ENCODE measurements at regions of chr1 and their contacts with region 1.

Region 1: GRCh38 chr1:109041621-109042468 is at the start of gene WDR47:
- DNase-seq: peak; percentile 95 to 98
- ATAC-seq: peak; percentile 98 to 100 (median 99)
- H3K4me3 ChIP-seq: peak within 1 kb of the TSS; percentile 98
- H3K27ac ChIP-seq: peak within 1 kb of the TSS; percentile 85
- H3K4me1 ChIP-seq: peaks cover 11% of the 10 kb centered on the region
- H3K27me3 ChIP-seq: no peaks in the 10 kb centered on the region
- CTCF ChIP-seq: no peak
- total RNA-seq, gene WDR47: 13.9 to 16.3 (median 14.9) TPM

Region 2: GRCh38 chr1:108963052-108963686 is 78.7 kb before region 1 on chr1 and contains the start of gene CLCC1:
- intact Hi-C with region 1: loop called in 1 of 2 experiments (anchors 10 kb)
- DNase-seq: peak; percentile 94 to 95
- ATAC-seq: peak; percentile 96 to 98 (median 96)
- H3K4me3 ChIP-seq: peak within 1 kb of the TSS; percentile 73
- H3K27ac ChIP-seq: peak within 1 kb of the TSS; percentile 94
- H3K4me1 ChIP-seq: peaks cover 19% of the 10 kb centered on the region
- H3K27me3 ChIP-seq: no peaks in the 10 kb centered on the region
- CTCF ChIP-seq: no peak
- total RNA-seq, gene CLCC1: 23.3 to 36.2 (median 30.0) TPM

Region 3: DNA sequence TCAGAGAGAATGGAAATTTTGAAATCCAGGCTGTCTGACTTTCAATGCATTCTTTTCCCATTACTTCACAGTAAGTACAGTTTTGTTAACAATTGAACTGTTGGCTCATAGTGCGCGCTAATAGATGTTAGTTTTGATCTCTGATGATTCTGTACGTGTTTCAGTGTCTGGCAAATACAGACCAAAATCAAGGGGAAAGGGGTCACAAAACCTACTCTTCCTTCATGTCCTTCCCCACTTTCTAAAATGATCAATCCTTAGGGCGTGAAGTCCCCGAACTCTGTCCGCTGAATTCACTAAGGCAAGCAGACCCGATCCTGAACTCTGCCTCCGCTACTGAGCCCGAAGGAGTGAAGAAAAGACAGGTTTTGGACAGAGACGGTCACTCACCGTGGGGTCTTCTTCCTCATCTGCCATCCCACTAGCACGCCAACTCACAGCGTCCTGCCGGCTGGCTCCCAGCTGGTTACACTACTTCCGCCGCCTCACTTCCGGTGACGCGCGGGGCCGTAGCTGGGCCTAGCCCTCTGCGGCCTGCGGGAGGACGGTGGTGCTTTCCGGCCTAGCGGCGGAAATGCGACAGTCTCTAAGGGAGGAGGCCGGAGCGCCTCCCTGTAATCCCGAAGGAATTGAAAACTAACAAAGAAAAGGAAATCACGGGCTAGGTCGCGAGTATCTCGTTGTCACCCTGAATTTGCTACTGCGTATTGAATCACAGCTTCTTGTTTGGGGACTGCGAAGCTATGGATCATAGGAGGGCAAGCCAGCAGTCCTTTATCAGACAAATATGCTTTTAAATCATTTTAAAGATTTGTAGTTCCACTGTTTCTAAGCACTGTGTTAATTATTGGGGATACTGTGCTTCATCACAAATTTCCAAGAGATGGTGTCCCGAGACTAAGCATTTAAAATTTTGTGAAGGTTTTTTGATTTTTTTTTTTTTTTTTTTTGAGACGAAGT is 34.0 kb after region 1 on chr1 and contains the start of gene TAF13:
- intact Hi-C with region 1: loop called in 1 of 2 experiments (anchors 5 kb)
- DNase-seq: peak; percentile 96 to 98
- ATAC-seq: peak; percentile 100
- H3K4me3 ChIP-seq: peak within 1 kb of the TSS; percentile 99
- H3K27ac ChIP-seq: peak within 1 kb of the TSS; percentile 99
- H3K4me1 ChIP-seq: peaks cover 9% of the 10 kb centered on the region
- H3K27me3 ChIP-seq: no peaks in the 10 kb centered on the region
- CTCF ChIP-seq: peak; percentile 44
- total RNA-seq, gene TAF13: 61.5 to 89.9 (median 72.9) TPM

Region 4: DNA sequence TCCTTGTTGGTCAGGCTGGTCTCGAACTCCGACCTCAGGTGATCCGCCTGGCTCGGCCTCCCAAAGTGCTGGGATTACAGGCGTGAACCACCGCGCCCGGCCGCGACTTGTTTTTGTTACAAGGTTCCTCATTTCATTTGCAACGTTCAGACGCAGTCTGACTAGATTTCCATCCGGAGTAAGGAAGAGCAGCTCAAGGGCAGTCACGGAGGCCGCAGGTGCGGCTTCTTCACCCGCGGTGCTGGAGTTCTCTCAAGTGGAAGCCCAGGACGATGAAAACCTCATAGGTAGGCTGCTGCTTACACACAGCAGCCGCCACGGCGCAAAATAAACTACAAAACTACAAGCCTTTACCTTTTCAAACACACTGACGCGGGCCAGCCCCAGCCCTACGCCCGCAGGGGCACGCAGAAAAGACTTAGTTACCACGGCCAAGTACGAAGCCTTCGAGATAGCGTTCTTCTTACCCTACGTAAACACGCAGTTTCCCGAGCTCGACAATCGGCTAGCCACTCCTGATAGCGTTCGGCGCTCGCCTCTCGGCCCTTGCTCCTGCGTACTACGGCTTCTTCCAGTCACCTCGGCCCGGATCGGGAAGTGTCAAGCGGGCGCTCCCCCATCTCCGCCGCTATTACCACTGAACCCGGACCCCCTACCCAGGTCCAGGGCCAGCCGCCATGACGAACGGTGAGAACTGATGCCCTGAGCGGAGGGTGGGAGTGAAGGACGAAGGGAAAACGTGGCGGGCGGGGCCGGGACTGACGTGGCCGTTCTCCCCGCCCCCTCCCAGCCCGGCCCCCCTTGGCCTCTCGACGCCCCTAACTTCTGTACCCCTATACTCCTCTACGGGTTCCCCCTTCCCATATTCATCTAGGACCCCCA is 48.6 kb after region 1 on chr1 and contains the start of gene TMEM167B:
- intact Hi-C with region 1: loop called (anchors 5 kb)
- DNase-seq: peak; percentile 92 to 94
- ATAC-seq: peak; percentile 94 to 95 (median 94)
- H3K4me3 ChIP-seq: peak within 1 kb of the TSS; percentile 92
- H3K27ac ChIP-seq: peak within 1 kb of the TSS; percentile 99
- H3K4me1 ChIP-seq: peaks cover 32% of the 10 kb centered on the region
- H3K27me3 ChIP-seq: no peaks in the 10 kb centered on the region
- CTCF ChIP-seq: no peak
- total RNA-seq, gene TMEM167B: 27.2 to 56.0 (median 34.0) TPM